ENCODE measurements at regions of chr6 and their contacts with region 1.

Region 1: GRCh38 chr6:39302669-39303424 is 11.4 kb downstream of the KCNK17 start:
- DNase-seq: peak; percentile 96
- ATAC-seq: peak; percentile 98
- H3K4me3 Mint-ChIP-seq: peak overlapping the region; percentile 44
- H3K27ac Mint-ChIP-seq: no peak overlapping the region
- H3K4me1 Mint-ChIP-seq: peaks cover 4% of the 10 kb centered on the region
- H3K27me3 Mint-ChIP-seq: no peaks in the 10 kb centered on the region

Region 2: GRCh38 chr6:38797391-38797790 is 505.5 kb before region 1 on chr6:
- CTCF ChIA-PET with region 1: no interaction called
- POLR2A ChIA-PET with region 1: no interaction called
- intact Hi-C with region 1: no loop called
- DNase-seq: no peak
- ATAC-seq: no peak
- H3K4me3 Mint-ChIP-seq: no peak overlapping the region
- H3K27ac Mint-ChIP-seq: no peak overlapping the region
- H3K4me1 Mint-ChIP-seq: no peaks in the 10 kb centered on the region
- H3K27me3 Mint-ChIP-seq: peaks cover 38% of the 10 kb centered on the region

Region 3: GRCh38 chr6:38997128-38997761 is 305.6 kb before region 1 on chr6:
- CTCF ChIA-PET with region 1: interaction called, 27 read pairs
- POLR2A ChIA-PET with region 1: no interaction called
- intact Hi-C with region 1: loop called (anchors 1 to 2 kb)
- DNase-seq: peak; percentile 68
- ATAC-seq: peak; percentile 55
- H3K4me3 Mint-ChIP-seq: no peak overlapping the region
- H3K27ac Mint-ChIP-seq: no peak overlapping the region
- H3K4me1 Mint-ChIP-seq: no peaks in the 10 kb centered on the region
- H3K27me3 Mint-ChIP-seq: peaks cover 29% of the 10 kb centered on the region

Region 4: DNA sequence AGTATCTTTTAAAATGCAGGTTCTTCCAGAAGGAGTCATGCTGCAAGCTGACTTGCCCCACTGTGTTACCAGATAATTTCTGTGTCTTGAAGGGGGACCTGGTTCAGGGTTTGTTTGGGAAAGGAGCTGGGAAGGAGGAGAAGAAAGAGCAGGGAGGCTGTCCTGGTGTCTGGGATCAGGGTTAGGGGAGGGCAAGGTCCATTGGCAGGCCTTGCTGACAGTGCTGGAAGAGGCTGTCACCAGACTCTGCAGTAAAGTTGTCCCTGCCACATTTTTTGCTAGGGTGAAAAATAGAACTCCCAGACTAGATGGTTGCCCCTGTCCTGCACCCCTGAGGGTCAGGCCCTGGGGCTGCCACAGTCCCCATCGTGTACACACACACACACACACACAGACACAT is 239.3 kb before region 1 on chr6:
- CTCF ChIA-PET with region 1: no interaction called
- POLR2A ChIA-PET with region 1: no interaction called
- intact Hi-C with region 1: no loop called
- DNase-seq: no peak
- ATAC-seq: no peak
- H3K4me3 Mint-ChIP-seq: no peak overlapping the region
- H3K27ac Mint-ChIP-seq: no peak overlapping the region
- H3K4me1 Mint-ChIP-seq: no peaks in the 10 kb centered on the region
- H3K27me3 Mint-ChIP-seq: peaks cover 7% of the 10 kb centered on the region

Region 5: DNA sequence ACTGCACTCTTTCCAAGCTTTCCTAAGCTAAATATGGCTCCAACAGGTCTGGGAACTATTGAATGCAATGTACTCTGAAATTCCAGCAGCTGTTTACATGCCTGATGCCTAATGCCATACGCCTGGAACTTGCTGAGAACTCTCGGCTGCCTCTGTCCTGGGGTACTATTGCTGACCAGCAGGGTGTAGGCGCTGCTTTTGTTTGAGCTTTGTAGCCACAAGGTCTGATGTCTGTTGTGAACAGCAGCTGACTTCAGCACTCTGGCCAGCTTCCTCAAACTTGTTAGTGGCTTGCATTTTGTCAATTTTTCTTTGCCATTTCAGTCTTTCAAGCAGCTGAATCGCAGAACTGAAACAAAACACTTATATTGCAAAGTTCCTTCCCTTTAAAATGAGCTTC is 214.5 kb before region 1 on chr6:
- CTCF ChIA-PET with region 1: interaction called, 10 read pairs
- POLR2A ChIA-PET with region 1: no interaction called
- intact Hi-C with region 1: no loop called
- DNase-seq: peak; percentile 41
- ATAC-seq: peak; percentile 34
- H3K4me3 Mint-ChIP-seq: no peak overlapping the region
- H3K27ac Mint-ChIP-seq: no peak overlapping the region
- H3K4me1 Mint-ChIP-seq: peaks cover 5% of the 10 kb centered on the region
- H3K27me3 Mint-ChIP-seq: peaks cover 40% of the 10 kb centered on the region

Region 6: GRCh38 chr6:39166189-39166911 is 136.5 kb before region 1 on chr6:
- CTCF ChIA-PET with region 1: interaction called, 211 read pairs
- POLR2A ChIA-PET with region 1: no interaction called
- intact Hi-C with region 1: loop called (anchors 1 kb)
- DNase-seq: peak; percentile 93
- ATAC-seq: peak; percentile 97
- H3K4me3 Mint-ChIP-seq: no peak overlapping the region
- H3K27ac Mint-ChIP-seq: no peak overlapping the region
- H3K4me1 Mint-ChIP-seq: peaks cover 5% of the 10 kb centered on the region
- H3K27me3 Mint-ChIP-seq: peaks cover 2% of the 10 kb centered on the region

Region 7: GRCh38 chr6:39228992-39229767 is 73.7 kb before region 1 on chr6 and contains the start of gene KCNK5:
- CTCF ChIA-PET with region 1: interaction called, 6 read pairs
- POLR2A ChIA-PET with region 1: no interaction called
- intact Hi-C with region 1: loop called (anchors 1 kb)
- DNase-seq: peak; percentile 94
- ATAC-seq: peak; percentile 93
- H3K4me3 Mint-ChIP-seq: peak within 1 kb of the TSS; percentile 86
- H3K27ac Mint-ChIP-seq: peak within 1 kb of the TSS; percentile 86
- H3K4me1 Mint-ChIP-seq: peaks cover 36% of the 10 kb centered on the region
- H3K27me3 Mint-ChIP-seq: peaks cover 2% of the 10 kb centered on the region
- total RNA-seq, gene KCNK5: 12.7 to 15.8 TPM

Region 8: GRCh38 chr6:39239527-39240154 is 63.2 kb before region 1 on chr6:
- CTCF ChIA-PET with region 1: no interaction called
- POLR2A ChIA-PET with region 1: no interaction called
- intact Hi-C with region 1: no loop called
- DNase-seq: no peak
- ATAC-seq: no peak
- H3K4me3 Mint-ChIP-seq: no peak overlapping the region
- H3K27ac Mint-ChIP-seq: no peak overlapping the region
- H3K4me1 Mint-ChIP-seq: no peaks in the 10 kb centered on the region
- H3K27me3 Mint-ChIP-seq: no peaks in the 10 kb centered on the region

Region 9: DNA sequence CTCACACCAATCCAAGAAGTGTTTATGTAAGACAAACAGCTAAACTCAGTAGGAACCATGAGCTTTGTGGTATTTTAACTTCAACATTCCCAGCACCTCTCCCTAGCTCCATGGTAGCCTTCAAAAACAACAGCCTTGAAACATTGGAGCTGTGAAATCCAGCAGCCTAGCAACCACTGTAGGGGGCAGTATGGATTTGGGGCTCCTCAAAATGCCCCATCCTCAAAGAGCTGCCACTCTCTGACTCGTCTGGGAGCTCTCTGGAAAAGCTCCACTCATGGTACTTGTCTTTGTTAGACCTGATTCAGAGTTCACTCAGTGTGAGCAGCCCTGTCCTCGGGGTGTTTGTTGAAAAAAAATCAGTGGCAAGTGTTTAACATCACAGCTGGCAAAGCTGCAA is 339.4 kb after region 1 on chr6:
- CTCF ChIA-PET with region 1: no interaction called
- POLR2A ChIA-PET with region 1: no interaction called
- intact Hi-C with region 1: no loop called
- DNase-seq: no peak
- ATAC-seq: no peak
- H3K4me3 Mint-ChIP-seq: no peak overlapping the region
- H3K27ac Mint-ChIP-seq: no peak overlapping the region
- H3K4me1 Mint-ChIP-seq: no peaks in the 10 kb centered on the region
- H3K27me3 Mint-ChIP-seq: peaks cover 18% of the 10 kb centered on the region

Measured in activated CD4-positive, alpha-beta T cell treated with anti-CD3 and anti-CD28 coated beads for 36 hours (primary cell).